ENCODE measurements at regions of chr20 and their contacts with region 1.

Region 1: GRCh38 chr20:35947489-35947888 is 6.8 kb downstream of the SCAND1 start:
- DNase-seq: no peak
- CTCF ChIP-seq: peak; percentile 39

Region 2: GRCh38 chr20:35791821-35792220 is 155.7 kb before region 1 on chr20:
- CTCF ChIA-PET with region 1: no interaction called
- POLR2A ChIA-PET with region 1: no interaction called
- DNase-seq: no peak
- CTCF ChIP-seq: no peak

Region 3: GRCh38 chr20:35893942-35894341 is 53.5 kb before region 1 on chr20:
- CTCF ChIA-PET with region 1: no interaction called
- POLR2A ChIA-PET with region 1: no interaction called
- DNase-seq: peak; percentile 62
- CTCF ChIP-seq: no peak

Region 4: DNA sequence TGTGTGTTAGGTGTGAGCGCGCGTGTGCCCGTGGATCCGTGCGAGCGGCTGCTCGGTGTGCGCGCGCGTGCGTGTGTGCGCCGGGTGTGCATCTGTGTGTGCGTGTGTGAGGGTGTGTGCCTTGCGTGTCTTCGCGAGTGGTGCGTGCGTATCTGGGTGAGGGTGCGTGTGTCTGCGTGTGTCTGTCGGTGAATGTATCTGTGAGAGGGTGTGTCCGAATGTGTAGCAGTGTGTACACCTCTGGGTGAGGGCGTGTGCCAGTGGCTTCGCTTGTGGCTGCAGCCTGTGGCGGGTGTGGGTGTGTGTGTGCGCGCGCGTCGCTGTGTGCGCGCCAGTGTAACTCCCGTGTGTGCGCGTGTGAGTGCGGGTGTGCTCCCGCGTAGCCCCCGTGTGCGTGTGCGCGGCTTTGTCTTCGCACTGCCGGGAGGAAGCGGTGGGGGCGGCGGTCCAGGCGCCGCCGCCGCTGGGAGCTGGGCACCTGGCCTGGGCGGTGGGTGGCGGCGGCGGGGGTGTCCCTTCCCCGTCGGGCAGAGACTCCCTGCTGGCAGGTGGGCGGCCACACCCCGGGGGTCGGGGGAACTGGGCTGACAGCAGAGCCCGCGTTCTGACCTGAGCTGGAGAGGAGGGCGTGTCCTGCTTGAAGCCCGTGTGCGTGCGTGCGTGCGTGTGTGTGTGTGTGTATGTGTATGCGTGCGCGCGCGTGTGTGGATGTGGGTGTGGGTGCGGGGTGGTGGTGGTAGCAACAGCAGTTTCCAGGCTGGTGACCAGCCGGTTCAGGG is 145.7 kb after region 1 on chr20:
- CTCF ChIA-PET with region 1: no interaction called
- POLR2A ChIA-PET with region 1: interaction called, 11 read pairs
- DNase-seq: no peak
- CTCF ChIP-seq: no peak